ENCODE measurements at regions of chr6 and their contacts with region 1.

Region 1: DNA sequence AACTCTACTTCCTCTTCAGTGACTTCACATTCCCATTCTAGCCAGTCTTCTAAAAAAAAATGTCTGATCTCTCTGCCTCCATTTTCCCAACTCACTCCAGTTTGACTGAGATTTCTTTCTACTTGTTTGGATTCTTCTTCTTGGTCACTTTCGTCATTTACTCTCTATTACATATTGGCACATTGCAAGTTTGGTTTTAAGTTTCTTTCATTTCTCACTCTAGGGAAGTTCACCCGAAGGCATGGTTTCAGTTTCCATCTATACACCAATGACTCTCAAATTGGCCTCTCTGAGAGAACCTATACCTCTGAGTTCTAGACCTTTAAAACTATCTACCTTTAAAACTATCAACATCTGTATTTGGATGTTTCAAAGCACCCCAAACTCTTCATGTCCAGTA is 51.3 kb downstream of the CD109 start:
- DNase-seq: peak; percentile 67
- H3K4me3 Mint-ChIP-seq: no peak overlapping the region
- H3K27ac Mint-ChIP-seq: no peak overlapping the region
- H3K4me1 Mint-ChIP-seq: no peaks in the 10 kb centered on the region
- H3K27me3 Mint-ChIP-seq: no peaks in the 10 kb centered on the region

Region 2: DNA sequence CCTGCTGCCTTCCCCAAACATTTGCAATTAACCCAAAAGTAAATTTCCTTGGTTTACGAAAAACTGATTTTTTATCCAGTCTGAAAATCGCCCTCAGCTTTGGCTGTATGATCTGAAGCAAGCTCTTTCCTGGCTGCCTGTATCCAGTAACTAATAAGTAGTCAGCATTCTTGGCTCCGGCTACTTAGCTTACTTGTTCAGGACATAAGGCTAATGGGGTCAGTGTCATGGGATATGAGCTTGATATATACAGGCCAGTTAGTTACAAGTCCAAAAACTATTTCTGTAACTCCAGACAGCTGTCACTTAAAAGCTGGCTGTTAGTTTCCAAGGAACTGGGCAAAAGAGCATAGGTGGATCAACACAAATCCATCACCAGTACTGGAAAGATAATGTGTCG is 578.2 kb before region 1 on chr6:
- intact Hi-C with region 1: no loop called
- DNase-seq: no peak
- H3K4me3 Mint-ChIP-seq: no peak overlapping the region
- H3K27ac Mint-ChIP-seq: no peak overlapping the region
- H3K4me1 Mint-ChIP-seq: no peaks in the 10 kb centered on the region
- H3K27me3 Mint-ChIP-seq: no peaks in the 10 kb centered on the region

Region 3: GRCh38 chr6:73766040-73766439 is 18.8 kb after region 1 on chr6:
- intact Hi-C with region 1: no loop called
- DNase-seq: no peak
- H3K4me3 Mint-ChIP-seq: no peak overlapping the region
- H3K27ac Mint-ChIP-seq: no peak overlapping the region
- H3K4me1 Mint-ChIP-seq: peaks cover 4% of the 10 kb centered on the region
- H3K27me3 Mint-ChIP-seq: no peaks in the 10 kb centered on the region

Region 4: DNA sequence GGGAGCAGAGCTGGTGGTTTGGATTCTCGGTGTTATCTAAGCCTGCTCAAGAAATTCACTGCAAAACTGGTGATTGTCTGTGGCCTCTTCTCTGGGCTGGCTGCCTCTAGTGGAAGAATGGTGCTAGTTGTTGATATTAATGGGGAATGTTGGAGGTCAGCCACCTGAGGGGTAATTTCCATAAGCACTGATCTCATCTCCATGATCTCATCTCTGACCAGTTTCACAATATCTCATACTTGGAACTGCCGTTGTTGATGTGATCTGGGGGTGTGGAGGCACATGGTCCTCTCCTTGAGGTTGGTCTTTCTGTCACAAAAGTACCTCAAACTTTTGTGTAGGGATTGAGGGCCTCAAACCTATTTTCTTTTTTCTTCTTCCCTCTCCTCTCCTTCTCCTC is 51.3 kb after region 1 on chr6:
- intact Hi-C with region 1: loop called (anchors 5 kb)
- DNase-seq: peak; percentile 55
- H3K4me3 Mint-ChIP-seq: no peak overlapping the region
- H3K27ac Mint-ChIP-seq: peak overlapping the region; percentile 72
- H3K4me1 Mint-ChIP-seq: peaks cover 14% of the 10 kb centered on the region
- H3K27me3 Mint-ChIP-seq: no peaks in the 10 kb centered on the region

Region 5: DNA sequence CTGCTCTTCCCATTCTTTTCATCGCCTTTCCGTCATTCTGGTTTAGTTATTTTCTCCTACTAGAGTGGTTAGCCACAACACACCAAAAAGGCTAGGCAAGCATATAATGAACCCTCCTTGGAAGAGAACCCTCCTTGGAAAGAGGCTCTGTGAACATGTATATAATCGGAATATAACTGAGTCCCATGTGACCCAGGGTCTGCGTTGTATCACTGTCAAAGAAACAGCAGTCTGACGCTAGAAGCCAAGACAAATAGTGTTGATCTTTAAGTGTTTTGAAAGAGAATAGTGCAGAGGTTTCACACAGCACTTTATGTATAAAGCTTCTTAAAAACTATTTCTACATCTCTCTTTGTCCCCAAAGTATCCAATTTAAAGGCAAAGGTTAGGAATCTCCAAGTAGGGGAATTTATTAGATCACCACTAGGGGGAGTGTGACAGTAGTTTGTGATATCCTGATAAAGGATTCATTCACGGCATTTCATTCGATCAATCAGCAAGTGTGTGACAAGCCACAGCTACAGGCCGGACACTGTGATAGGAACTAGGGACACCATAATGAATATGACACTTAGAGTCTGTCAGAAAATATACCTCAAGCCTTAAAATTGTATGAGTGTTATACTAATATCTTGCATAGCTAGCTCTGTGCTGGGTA is 344.0 kb after region 1 on chr6:
- intact Hi-C with region 1: loop called (anchors 5 kb)
- DNase-seq: no peak
- H3K4me3 Mint-ChIP-seq: no peak overlapping the region
- H3K27ac Mint-ChIP-seq: no peak overlapping the region
- H3K4me1 Mint-ChIP-seq: no peaks in the 10 kb centered on the region
- H3K27me3 Mint-ChIP-seq: peaks cover 3% of the 10 kb centered on the region